GM10248 (cell line): ENCODE measurements at regions of chr10 and their contacts with region 1.

Region 1: DNA sequence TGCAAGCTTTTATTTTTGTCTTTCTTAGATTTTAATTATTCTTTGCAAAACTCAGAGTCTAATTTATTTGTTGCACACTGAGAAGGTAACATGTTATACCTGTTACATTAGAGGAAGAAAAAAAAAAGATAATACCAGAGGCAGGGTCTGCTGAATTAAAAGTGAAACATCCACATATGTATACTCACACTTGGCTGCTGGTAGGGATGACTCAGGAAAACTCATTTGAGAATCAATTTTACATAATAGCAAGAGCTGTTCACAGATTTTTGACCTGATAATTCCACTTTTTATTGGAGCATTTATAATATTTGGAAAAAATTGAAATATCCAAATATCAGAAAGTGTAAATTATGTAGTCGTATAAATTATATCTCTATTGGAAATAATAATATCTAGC is 78.1 kb upstream of the CCDC6 start:
- DNase-seq: no peak
- CTCF ChIP-seq: no peak

Region 2: DNA sequence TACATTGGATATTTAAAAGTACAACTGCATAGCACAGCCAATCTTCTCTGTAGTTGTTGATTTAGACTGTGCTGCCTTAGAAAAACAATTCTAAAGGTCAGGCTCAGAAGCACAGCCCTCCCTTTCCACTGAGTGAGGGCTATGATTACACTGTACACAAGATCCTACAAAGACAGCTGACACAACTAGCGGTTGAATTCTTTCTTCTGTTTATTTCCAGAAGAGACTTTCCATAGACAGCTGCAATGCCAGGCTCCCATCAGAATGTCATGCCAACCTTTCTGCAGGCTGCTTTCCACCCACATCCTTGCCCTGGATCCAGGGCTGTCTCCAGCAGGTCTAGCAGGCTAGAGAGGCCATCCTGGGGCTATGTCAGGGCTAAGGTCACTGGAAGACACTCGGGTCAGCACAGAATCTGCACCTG is 661.4 kb before region 1 on chr10:
- CTCF ChIA-PET with region 1: no interaction called
- POLR2A ChIA-PET with region 1: no interaction called
- DNase-seq: no peak
- CTCF ChIP-seq: no peak

Region 3: DNA sequence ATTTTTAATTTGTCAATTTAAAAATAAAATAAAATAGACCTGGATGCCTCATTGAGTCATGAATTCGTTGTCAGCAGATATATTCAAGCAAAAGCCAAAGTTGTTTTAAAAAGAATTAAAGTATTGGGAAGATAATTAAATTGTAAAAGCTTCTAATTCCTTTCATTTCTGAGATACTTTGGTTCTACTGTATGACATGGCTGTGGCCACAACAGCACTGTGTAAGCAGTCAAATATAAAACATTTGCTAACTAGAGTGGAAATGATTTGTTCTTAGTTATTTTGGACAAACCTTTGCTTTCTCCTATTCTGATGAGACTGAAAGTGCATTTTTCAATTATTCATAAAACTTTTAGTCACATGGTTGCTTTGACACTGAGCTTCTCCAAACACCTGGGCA is 478.5 kb before region 1 on chr10:
- CTCF ChIA-PET with region 1: no interaction called
- POLR2A ChIA-PET with region 1: interaction called, 12 read pairs
- DNase-seq: no peak
- CTCF ChIP-seq: no peak

Region 4: GRCh38 chr10:59970396-59971368 is 13.7 kb before region 1 on chr10:
- CTCF ChIA-PET with region 1: no interaction called
- POLR2A ChIA-PET with region 1: no interaction called
- DNase-seq: peak; percentile 39
- CTCF ChIP-seq: peak; percentile 6

Region 5: GRCh38 chr10:60000747-60001146 is 16.3 kb after region 1 on chr10:
- CTCF ChIA-PET with region 1: no interaction called
- POLR2A ChIA-PET with region 1: no interaction called
- DNase-seq: no peak
- CTCF ChIP-seq: no peak